WTC11 (cell line): ENCODE measurements at regions of chr17 and their contacts with region 1.

Region 1: GRCh38 chr17:28896884-28897768 is at the start of gene FLOT2:
- DNase-seq: peak; percentile 72
- ATAC-seq: peak; percentile 69
- H3K4me3 Mint-ChIP-seq: peak within 1 kb of the TSS; percentile 94
- H3K27ac Mint-ChIP-seq: peak within 1 kb of the TSS; percentile 93
- H3K4me1 Mint-ChIP-seq: peaks cover 33% of the 10 kb centered on the region
- H3K27me3 Mint-ChIP-seq: no peaks in the 10 kb centered on the region
- CTCF ChIP-seq: no peak
- total RNA-seq, gene FLOT2: 139 to 153 TPM (median 144 TPM) in 3 replicates

Region 2: GRCh38 chr17:28849281-28849680 is 47.8 kb before region 1 on chr17:
- CTCF ChIA-PET with region 1: interaction called, 10 read pairs
- POLR2A ChIA-PET with region 1: no interaction called
- DNase-seq: no peak
- ATAC-seq: peak; percentile 60
- H3K4me3 Mint-ChIP-seq: no peak overlapping the region
- H3K27ac Mint-ChIP-seq: no peak overlapping the region; the same call in 1 of the 2 replicates
- H3K4me1 Mint-ChIP-seq: peaks cover 3% of the 10 kb centered on the region; the same call in 1 of the 2 replicates
- H3K27me3 Mint-ChIP-seq: no peaks in the 10 kb centered on the region
- CTCF ChIP-seq: no peak

Region 3: DNA sequence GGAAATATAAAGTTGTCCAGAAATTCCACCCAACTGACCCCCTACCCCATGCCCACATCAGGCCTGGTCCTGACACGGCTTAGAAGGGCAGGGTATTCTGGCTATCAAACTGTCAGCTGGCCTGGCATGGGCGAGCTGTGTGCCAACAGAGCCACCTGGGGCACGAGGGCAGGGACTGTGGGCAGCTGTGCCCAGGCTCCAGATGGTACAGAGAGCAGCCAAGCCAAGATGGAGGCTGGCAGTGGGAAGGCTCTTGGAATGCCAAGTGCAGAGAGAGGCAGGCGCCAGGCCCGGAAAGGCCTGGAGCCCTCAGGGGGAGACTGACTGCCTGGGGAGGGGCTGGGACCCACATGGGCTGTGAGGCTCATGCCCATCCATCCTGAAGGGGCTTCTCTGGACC is 78.5 kb after region 1 on chr17:
- CTCF ChIA-PET with region 1: no interaction called
- POLR2A ChIA-PET with region 1: no interaction called
- DNase-seq: no peak
- ATAC-seq: no peak
- H3K4me3 Mint-ChIP-seq: no peak overlapping the region
- H3K27ac Mint-ChIP-seq: no peak overlapping the region
- H3K4me1 Mint-ChIP-seq: peaks cover 11% of the 10 kb centered on the region
- H3K27me3 Mint-ChIP-seq: peaks cover 15% of the 10 kb centered on the region
- CTCF ChIP-seq: no peak